A673 (cell line): ENCODE measurements at regions of chr9 and their contacts with region 1.

Region 1: GRCh38 chr9:108119530-108120113 is 630.1 kb upstream of the KLF4 start:
- DNase-seq: no peak
- H3K4me3 ChIP-seq: no peak overlapping the region
- H3K27ac ChIP-seq: no peak overlapping the region
- H3K4me1 ChIP-seq: no peaks in the 10 kb centered on the region
- H3K27me3 ChIP-seq: no peaks in the 10 kb centered on the region
- CTCF ChIP-seq: no peak

Region 2: DNA sequence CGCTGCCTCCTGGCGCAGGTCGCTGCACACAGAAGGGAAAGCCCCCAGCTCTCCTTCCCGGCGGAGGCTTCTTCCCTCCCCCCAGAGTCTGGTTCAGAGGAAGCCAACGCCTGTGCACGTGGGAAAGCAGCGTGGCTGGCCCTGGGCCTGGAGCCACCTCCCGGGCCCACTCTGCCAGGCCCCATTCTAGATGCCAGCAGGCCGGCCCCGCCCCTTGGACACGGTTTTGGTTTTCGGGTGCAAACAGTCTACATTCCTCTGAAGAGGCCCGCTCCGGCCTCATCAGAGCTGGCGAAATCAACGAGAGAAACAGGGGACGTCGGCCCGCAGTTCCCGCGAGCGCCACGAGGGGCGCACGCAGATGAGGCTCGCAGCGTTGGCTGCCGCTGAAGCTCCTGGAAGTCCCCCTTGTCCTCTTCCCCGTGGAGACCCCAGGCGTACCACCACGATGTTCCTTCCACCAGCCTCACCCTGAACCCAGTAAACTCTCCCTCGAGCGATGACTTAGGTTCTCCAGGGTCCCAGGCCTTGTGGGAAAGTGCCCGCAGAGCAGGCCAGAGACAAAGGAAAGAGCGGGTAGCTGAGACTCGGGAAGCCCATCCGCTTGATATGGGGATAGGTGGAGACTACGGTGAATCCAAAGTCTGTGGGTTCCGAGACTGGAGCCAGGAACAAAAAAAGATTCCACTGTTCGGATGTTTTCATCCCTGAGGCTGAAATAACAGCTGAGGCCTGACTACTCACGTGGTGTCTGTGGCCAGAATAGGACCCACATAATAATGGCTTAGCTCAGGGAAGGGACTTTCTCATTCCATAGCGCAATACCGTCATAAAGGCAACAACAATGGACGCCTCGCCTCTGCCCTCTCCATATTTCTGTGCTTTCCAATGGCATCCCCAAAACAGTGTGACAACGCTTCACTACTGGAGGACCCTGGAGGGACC is 694.2 kb before region 1 on chr9:
- CTCF ChIA-PET with region 1: no interaction called
- POLR2A ChIA-PET with region 1: no interaction called
- intact Hi-C with region 1: loop called (anchors 5 kb)
- DNase-seq: peak; percentile 73
- H3K4me3 ChIP-seq: no peak overlapping the region
- H3K27ac ChIP-seq: no peak overlapping the region
- H3K4me1 ChIP-seq: no peaks in the 10 kb centered on the region
- H3K27me3 ChIP-seq: no peaks in the 10 kb centered on the region
- CTCF ChIP-seq: peak; percentile 96